ENCODE measurements at regions of chr14 and their contacts with region 1.

Region 1: DNA sequence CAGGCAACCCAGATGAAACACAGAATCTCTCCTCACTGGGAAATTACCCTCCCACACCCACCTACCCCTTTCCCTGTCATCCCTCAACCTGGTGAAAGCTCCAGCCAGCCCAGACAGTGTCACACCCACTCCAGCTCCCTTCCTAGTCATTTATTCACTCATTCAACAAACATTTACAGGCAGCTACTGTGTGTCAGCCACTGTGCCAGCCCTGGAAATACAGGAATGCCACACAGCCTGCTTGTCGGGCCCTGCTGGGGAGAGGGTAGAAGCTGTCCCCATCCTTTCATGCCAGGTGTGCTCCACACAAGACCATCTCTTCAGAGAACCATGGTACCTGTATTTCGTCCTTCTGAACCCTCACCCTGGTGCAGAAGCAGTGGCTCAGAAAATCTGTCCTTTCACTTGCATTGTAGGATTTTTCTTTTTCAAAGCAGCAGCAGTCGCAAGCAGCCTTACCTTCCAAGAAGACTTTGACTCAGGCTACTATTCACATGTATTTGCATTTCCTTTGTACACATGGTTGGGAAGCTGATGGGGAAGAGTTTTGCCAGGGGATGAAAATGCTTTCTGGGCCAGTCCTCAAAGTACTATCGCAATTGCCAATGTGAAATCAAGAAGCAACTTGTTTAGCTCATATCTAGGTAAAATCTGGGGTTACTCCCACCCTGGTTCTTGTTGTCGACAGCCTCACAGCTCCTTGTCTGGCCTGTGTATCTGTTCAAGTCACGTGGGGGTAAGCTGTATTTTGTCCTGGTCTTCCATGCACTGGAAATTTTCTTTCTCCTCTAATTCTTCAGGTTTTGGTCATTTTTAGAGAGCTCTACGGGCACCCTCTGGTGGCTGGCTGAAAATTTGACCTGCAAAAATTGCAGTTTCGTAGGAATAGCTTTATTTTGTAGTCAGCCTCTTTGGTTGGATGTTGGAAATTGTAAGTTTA is 147.4 kb upstream of the EGLN3 start:
- DNase-seq: peak in 2 of 5 donors; percentile 27 to 43
- ATAC-seq: peak; percentile 21 to 65 (median 47)
- H3K4me3 ChIP-seq: no peak overlapping the region
- H3K27ac ChIP-seq: peak overlapping the region in 2 of 12 donors; percentile 3 to 13
- H3K4me1 ChIP-seq: peaks cover 0 to 20% (median 2%) of the 10 kb centered on the region in 12 donors
- H3K27me3 ChIP-seq: no peaks in the 10 kb centered on the region
- CTCF ChIP-seq: peak; percentile 28 to 78 (median 63)
- POLR2A ChIP-seq: no peak

Region 2: GRCh38 chr14:33839193-33840076 is 258.9 kb before region 1 on chr14:
- intact Hi-C with region 1: loop called (anchors 1 to 5 kb)
- DNase-seq: peak in 4 of 5 donors; percentile 37 to 53 (median 47)
- ATAC-seq: peak; percentile 65 to 81 (median 74)
- H3K4me3 ChIP-seq: no peak overlapping the region
- H3K27ac ChIP-seq: no peak overlapping the region
- H3K4me1 ChIP-seq: peaks cover 0 to 19% (median 2%) of the 10 kb centered on the region in 12 donors
- H3K27me3 ChIP-seq: no peaks in the 10 kb centered on the region
- CTCF ChIP-seq: peak; percentile 77 to 95 (median 86)
- POLR2A ChIP-seq: no peak

Region 3: GRCh38 chr14:33848706-33849454 is 249.4 kb before region 1 on chr14:
- intact Hi-C with region 1: loop called in 4 of 10 experiments (anchors 2 to 5 kb)
- DNase-seq: peak; percentile 58 to 72 (median 62)
- ATAC-seq: peak; percentile 80 to 96 (median 91)
- H3K4me3 ChIP-seq: no peak overlapping the region
- H3K27ac ChIP-seq: no peak overlapping the region
- H3K4me1 ChIP-seq: peaks cover 0 to 9% (median 0%) of the 10 kb centered on the region in 12 donors
- H3K27me3 ChIP-seq: no peaks in the 10 kb centered on the region
- CTCF ChIP-seq: peak; percentile 57 to 80 (median 72)
- POLR2A ChIP-seq: no peak

Region 4: GRCh38 chr14:34059855-34060638 is 38.3 kb before region 1 on chr14:
- intact Hi-C with region 1: loop called in 1 of 10 experiments (anchors 5 kb)
- DNase-seq: peak; percentile 83 to 91 (median 87)
- ATAC-seq: peak; percentile 57 to 96 (median 93)
- H3K4me3 ChIP-seq: peak overlapping the region; percentile 37 to 82 (median 64)
- H3K27ac ChIP-seq: peak overlapping the region; percentile 83 to 98 (median 95)
- H3K4me1 ChIP-seq: peaks cover 0 to 43% (median 29%) of the 10 kb centered on the region in 12 donors
- H3K27me3 ChIP-seq: no peaks in the 10 kb centered on the region
- CTCF ChIP-seq: peak; percentile 6 to 54 (median 38)
- POLR2A ChIP-seq: peak; percentile 24 to 76

Region 5: DNA sequence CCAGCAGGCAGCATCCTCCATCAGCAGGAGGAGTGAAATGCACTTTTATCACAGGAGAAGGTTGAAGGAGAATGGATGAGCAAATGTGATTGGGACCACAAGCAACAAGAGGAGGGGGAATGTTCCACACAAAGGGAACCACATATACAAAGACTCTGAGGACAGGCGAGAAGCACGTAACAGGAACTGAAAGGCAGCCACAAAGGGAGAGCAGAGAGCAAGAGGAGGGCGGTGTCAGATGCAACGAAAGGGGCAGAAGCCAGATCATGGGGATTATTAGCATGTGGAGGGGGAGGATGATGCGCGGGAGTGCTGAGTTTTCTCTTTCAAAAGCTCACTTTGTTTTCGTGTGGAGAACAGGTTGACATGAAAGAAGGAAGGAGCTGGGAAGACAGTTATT is 122.6 kb after region 1 on chr14:
- intact Hi-C with region 1: loop called in 7 of 10 experiments (anchors 2 to 5 kb)
- DNase-seq: no peak
- ATAC-seq: no peak
- H3K4me3 ChIP-seq: no peak overlapping the region
- H3K27ac ChIP-seq: no peak overlapping the region
- H3K4me1 ChIP-seq: peaks cover 0 to 5% (median 0%) of the 10 kb centered on the region in 12 donors
- H3K27me3 ChIP-seq: no peaks in the 10 kb centered on the region
- CTCF ChIP-seq: no peak
- POLR2A ChIP-seq: no peak

Region 6: DNA sequence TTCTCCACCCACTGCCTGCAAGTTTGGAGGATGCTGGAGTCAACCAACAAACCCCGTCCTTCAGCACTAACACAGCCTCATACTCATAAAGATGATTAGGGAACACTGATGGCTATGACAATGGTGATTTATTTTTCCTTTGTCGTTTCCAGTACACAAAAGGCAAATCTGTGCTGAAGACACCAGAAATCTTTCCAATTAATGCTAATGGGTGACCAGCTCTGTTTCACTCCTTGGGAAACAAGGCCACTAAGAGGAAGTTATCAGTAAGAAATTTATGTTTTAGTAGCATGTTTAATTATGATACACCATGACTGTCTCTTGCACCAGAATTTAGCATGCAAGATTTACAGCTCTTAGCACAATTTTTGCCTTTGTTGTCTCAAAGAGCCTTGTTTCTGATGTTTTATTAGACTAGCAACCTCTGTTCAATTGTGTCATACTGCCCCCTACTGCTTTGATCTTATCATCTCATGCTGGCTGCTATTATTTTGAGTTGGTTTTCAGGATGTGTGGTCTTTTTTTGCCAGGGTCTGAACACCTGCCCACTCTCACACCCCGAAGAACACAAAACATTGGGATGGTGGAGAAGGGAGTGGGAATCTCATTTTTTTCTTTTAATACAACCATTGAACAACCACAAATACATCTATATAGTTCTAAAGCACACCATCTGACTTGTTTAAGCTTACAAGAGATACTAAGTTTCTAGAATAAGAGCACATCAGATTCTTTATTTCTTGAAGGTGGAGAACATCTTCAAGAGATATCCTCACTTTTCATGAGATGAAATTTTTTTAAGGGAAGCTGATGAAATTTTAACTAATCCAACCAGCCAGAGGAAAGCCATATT is 202.8 kb after region 1 on chr14:
- intact Hi-C with region 1: loop called in 5 of 10 experiments (anchors 5 to 10 kb)
- DNase-seq: no peak
- ATAC-seq: peak in 3 of 4 donors; percentile 38 to 70 (median 45)
- H3K4me3 ChIP-seq: no peak overlapping the region
- H3K27ac ChIP-seq: no peak overlapping the region
- H3K4me1 ChIP-seq: no peaks in the 10 kb centered on the region
- H3K27me3 ChIP-seq: no peaks in the 10 kb centered on the region
- CTCF ChIP-seq: peak; percentile 46 to 74 (median 62)
- POLR2A ChIP-seq: no peak